Breast epithelium (tissue), 4 donors: ENCODE measurements at regions of chr3 and their contacts with region 1.

Region 1: GRCh38 chr3:29183346-29184087 is 97.4 kb upstream of the RBMS3 start:
- DNase-seq: no peak
- H3K4me3 ChIP-seq: no peak overlapping the region
- H3K27ac ChIP-seq: no peak overlapping the region
- H3K4me1 ChIP-seq: no peaks in the 10 kb centered on the region
- H3K27me3 ChIP-seq: no peaks in the 10 kb centered on the region
- CTCF ChIP-seq: no peak
- POLR2A ChIP-seq: no peak

Region 2: GRCh38 chr3:28916713-28917499 is 266.6 kb before region 1 on chr3:
- intact Hi-C with region 1: no loop called
- DNase-seq: peak in 1 of 2 donors; percentile 29
- H3K4me3 ChIP-seq: peak overlapping the region; percentile 27 to 62 (median 43)
- H3K27ac ChIP-seq: peak overlapping the region; percentile 34 to 76
- H3K4me1 ChIP-seq: no peaks in the 10 kb centered on the region
- H3K27me3 ChIP-seq: no peaks in the 10 kb centered on the region
- CTCF ChIP-seq: peak in 1 of 3 donors; percentile 48
- POLR2A ChIP-seq: no peak

Region 3: DNA sequence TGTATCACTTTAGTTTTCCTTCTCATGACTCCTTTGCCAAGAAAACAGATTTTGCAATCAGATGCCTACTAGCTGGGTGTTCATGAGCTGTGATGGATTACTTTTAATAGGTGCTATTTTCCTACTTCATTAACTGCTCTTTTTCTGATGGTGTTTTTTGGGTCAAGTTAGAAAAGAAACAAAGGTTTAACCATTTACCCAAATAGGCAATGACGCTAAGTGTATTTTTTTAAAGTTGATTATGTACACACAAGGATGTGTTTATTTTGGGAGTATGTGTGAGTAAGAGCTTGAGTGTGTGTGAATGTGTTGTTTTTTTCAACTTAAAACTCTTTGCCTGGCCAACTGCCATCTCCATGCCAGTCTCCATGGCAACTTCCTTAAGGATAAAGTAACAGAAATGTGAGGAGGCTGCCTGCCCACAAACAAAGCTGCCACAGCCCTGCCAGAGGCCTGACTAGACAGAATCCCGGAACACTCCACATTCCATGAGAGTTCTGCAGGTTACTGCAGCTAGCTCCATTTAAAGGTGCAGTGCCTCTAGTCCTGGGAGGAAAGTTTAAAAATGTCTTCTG is 118.2 kb before region 1 on chr3:
- intact Hi-C with region 1: loop called (anchors 5 kb)
- DNase-seq: peak; percentile 53 to 90
- H3K4me3 ChIP-seq: no peak overlapping the region
- H3K27ac ChIP-seq: peak overlapping the region in 1 of 2 donors; percentile 9
- H3K4me1 ChIP-seq: no peaks in the 10 kb centered on the region
- H3K27me3 ChIP-seq: no peaks in the 10 kb centered on the region
- CTCF ChIP-seq: no peak
- POLR2A ChIP-seq: no peak

Region 4: GRCh38 chr3:29239377-29239776 is 55.9 kb after region 1 on chr3:
- intact Hi-C with region 1: loop called (anchors 2 kb)
- DNase-seq: no peak
- H3K4me3 ChIP-seq: no peak overlapping the region
- H3K27ac ChIP-seq: no peak overlapping the region
- H3K4me1 ChIP-seq: no peaks in the 10 kb centered on the region
- H3K27me3 ChIP-seq: no peaks in the 10 kb centered on the region
- CTCF ChIP-seq: no peak
- POLR2A ChIP-seq: no peak